ENCODE measurements at regions of chr17 and their contacts with region 1.

Region 1: GRCh38 chr17:35540589-35541404 is 3.3 kb upstream of the SLFN12L start:
- DNase-seq: no peak
- ATAC-seq: no peak
- H3K4me3 ChIP-seq: peak overlapping the region in 2 of 3 experiments; percentile 27 to 42; a peak in 3 of 6 replicates
- H3K27ac ChIP-seq: no peak overlapping the region
- H3K4me1 ChIP-seq: no peaks in the 10 kb centered on the region
- H3K27me3 ChIP-seq: 0 out of 5 replicates have a peak, but pooled peaks cover 0 to 3% of the 10 kb centered on the region in 2 experiments
- CTCF ChIP-seq: no peak
- EP300 ChIP-seq: no peak
- POLR2A ChIP-seq: no peak
- RAD21 ChIP-seq: no peak

Region 2: DNA sequence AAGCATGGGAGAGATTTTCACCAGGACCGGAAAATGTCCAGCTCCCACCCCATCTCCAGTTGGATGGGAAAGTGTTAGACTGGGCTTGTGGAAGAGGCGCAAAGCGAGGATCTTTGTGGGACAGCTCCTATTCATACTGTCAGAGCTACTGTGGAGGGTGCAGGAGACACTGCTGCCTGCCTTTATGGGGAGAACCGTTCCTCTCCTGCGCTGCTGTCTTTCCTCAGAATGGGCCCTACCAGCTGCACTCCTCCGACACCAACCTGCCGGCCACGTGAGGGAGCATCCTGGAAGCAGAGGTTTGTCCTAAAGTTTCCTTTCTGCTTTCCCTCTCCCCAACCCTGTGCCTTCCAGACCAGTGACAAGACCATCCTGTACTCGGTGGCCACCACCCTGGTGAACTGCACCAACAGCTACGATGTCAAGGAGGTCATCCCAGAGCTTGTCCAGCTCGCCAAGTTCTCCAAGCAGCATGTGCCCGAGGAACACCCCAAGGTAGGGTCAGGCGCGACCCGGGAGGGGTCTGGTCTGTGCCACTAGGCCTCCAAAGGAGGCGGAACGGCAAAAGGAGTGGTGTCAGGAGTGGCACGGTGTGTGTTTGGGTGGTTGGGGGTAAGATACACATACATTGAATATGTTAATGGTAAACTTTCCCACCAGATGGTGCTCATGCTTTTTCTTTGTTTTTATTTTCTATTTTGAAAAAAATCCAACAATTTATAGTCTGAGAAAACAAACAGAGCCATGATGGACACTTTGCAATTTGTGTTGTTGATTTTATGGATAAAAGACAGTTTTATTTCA is 369.6 kb before region 1 on chr17:
- CTCF ChIA-PET with region 1: no interaction called
- POLR2A ChIA-PET with region 1: no interaction called
- in situ Hi-C with region 1: loop called (anchors 10 kb)
- intact Hi-C with region 1: no loop called
- DNase-seq: no peak
- ATAC-seq: no peak
- H3K4me3 ChIP-seq: no peak overlapping the region
- H3K27ac ChIP-seq: no peak overlapping the region
- H3K4me1 ChIP-seq: no peaks in the 10 kb centered on the region
- H3K27me3 ChIP-seq: peaks cover 0 to 28% of the 10 kb centered on the region in 2 experiments; a peak in 4 of 5 replicates
- CTCF ChIP-seq: no peak
- EP300 ChIP-seq: no peak
- POLR2A ChIP-seq: no peak
- RAD21 ChIP-seq: no peak

Region 3: DNA sequence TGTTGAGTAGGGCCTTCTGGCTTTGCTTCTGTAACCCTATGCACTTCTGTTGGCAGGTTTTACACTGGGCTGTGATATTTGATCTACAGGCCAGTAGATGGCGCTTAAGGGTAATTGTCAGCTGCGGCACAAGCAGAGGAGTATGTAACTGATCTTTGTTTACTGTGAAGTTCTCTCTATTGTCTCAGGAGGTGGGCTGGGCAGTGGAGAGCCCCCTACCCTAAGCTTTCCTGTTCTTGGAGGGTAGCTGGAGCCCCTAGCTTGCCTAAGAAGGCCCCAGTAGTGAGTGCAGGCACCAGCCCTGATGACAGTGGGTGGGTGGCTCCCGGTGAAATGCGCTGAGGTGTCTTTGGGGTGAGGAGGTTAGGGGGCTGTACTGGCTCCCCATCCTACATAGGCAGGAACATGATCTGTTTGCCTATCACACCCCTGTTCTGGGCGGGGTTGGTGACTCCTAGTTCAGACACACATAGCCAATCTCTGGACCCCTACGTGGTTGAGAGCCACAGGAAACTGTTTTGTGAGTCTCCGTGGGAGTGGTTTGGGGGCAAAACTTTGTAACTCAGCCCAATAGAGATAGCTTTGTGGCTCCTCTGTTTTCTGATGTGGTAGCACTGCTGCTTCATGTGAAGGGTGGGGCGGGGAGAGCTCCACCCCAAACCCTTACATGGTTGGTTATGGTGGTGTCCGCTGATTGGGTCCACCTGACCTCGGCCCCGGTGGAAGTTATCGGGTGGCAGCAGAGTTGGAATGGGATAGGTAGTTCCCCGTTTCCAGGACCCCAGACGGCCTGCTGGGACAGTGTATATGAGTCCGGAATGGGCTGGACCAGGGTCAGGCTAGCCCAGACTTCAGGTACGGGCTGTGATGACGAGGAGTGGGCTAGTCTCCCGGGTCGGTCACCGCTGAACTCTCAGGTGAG is 227.7 kb before region 1 on chr17:
- CTCF ChIA-PET with region 1: interaction called, 7 read pairs
- POLR2A ChIA-PET with region 1: no interaction called
- in situ Hi-C with region 1: loop called (anchors 5 kb)
- intact Hi-C with region 1: loop called (anchors 1 kb)
- DNase-seq: peak; percentile 43
- ATAC-seq: peak; percentile 92
- H3K4me3 ChIP-seq: no peak overlapping the region
- H3K27ac ChIP-seq: no peak overlapping the region
- H3K4me1 ChIP-seq: no peaks in the 10 kb centered on the region
- H3K27me3 ChIP-seq: no peaks in the 10 kb centered on the region; a peak in 1 of 5 replicates
- CTCF ChIP-seq: peak; percentile 82
- EP300 ChIP-seq: no peak
- POLR2A ChIP-seq: no peak
- RAD21 ChIP-seq: peak; percentile 56

Region 4: GRCh38 chr17:35568541-35568940 is 27.7 kb after region 1 on chr17:
- CTCF ChIA-PET with region 1: no interaction called
- POLR2A ChIA-PET with region 1: no interaction called
- in situ Hi-C with region 1: no loop called
- intact Hi-C with region 1: no loop called
- DNase-seq: peak; percentile 29
- ATAC-seq: peak; percentile 73
- H3K4me3 ChIP-seq: peak overlapping the region; percentile 86 to 95 (median 92)
- H3K27ac ChIP-seq: peak overlapping the region; percentile 83
- H3K4me1 ChIP-seq: peaks cover 27% of the 10 kb centered on the region
- H3K27me3 ChIP-seq: peaks cover 0 to 3% of the 10 kb centered on the region in 2 experiments; a peak in 1 of 5 replicates
- CTCF ChIP-seq: no peak
- EP300 ChIP-seq: no peak
- POLR2A ChIP-seq: no peak
- RAD21 ChIP-seq: no peak

Region 5: DNA sequence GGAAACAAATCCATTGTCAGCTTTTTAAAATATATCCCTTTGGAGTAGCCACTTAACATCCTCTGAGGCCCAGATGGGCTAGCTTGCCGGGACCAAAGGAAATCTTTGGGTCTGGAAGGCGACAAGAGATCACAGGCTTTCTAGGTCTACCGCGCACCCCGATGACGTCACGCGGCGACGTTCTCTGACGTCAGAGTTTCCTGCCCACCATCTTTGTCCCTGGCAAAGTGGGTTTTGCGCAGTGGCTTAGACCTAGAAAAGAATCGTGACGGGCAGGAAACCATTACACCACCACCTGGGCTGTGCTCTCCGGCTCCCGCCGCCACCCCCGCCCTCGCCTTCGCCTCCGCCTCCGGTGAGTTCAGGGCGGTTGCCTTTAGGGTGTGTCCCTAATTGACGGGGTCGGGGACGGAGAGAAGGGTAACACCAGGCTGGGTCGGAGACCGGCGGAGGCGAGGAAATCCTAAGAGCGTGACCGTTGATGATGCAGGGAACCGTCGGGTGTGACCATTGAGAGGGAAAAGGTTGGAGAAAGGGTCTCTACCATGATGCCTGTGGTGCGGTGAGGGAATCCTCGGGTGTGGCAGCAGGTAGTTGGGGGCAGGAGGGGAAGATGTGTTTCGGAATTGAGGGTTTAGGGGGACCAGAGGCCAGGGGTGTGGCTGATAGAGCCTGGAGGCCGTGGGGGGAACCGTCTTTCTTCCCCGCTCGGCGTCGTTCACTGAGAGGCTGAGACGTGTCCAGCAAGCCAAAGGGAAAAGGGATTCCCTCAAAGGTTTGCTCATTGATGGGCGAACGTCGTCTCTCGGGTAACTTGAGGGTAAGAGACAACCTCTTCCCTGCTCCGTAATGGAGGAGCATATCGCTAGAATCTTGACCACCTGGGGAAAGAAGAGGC is 46.5 kb after region 1 on chr17 and contains the start of gene AP2B1:
- CTCF ChIA-PET with region 1: no interaction called
- POLR2A ChIA-PET with region 1: no interaction called
- in situ Hi-C with region 1: no loop called
- intact Hi-C with region 1: no loop called
- DNase-seq: peak; percentile 83
- ATAC-seq: peak; percentile 93
- H3K4me3 ChIP-seq: peak within 1 kb of the TSS; percentile 67 to 92 (median 89)
- H3K27ac ChIP-seq: peak within 1 kb of the TSS; percentile 61
- H3K4me1 ChIP-seq: peaks cover 26% of the 10 kb centered on the region
- H3K27me3 ChIP-seq: no peaks in the 10 kb centered on the region; a peak in 1 of 5 replicates
- CTCF ChIP-seq: peak; percentile 13; the same call in 1 of the 2 replicates
- EP300 ChIP-seq: no peak
- POLR2A ChIP-seq: peak; percentile 68 to 71
- RAD21 ChIP-seq: peak; percentile 45
- total RNA-seq, gene AP2B1: 23.8 and 58.4 TPM in 2 replicates